ENCODE measurements at regions of chr7 and their contacts with region 1.

Region 1: DNA sequence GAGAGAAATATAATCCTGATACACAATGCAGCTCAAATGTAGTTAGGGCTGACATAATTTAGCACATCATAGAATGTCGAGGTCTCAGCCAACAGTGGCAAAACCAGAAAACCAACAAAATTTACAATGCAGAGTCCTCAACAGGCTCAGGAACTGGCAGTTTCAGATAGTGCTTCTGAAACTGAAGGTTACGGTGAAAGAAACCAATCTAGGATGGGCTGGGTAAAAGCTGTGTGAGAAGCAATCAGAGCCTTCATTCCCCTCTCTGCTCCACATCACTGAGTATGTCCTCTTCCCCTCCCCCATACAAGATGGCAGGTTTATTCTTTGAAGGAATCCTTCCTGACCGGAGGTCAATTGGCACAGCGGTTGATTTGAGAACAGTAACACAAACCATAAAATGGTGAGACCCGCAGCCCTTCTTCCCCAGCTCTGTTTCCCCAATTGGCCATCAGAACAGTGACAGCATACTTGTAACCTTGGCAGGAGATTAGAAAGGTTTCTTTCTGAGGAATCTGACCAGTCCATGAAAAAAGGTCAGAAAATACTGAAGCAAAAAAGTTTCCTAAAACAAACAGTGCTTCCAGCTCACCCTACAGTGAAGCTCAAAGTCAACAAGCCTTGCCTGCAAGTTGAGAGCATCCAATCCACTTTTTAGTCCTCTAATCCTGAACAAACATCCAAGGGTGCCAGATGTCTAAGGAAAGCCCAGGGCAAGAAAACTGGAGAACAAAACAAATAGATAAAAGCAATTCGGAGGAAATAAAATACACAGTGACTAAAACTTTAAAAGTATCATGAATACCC is 54.0 kb upstream of the IL6 start:
- DNase-seq: no peak
- ATAC-seq: no peak
- H3K4me3 ChIP-seq: no peak overlapping the region
- H3K4me3 Mint-ChIP-seq: peak overlapping the region in 7 of 10 donors; percentile 7 to 68 (median 37)
- H3K27ac ChIP-seq: no peak overlapping the region
- H3K27ac Mint-ChIP-seq: peak overlapping the region; percentile 14 to 88 (median 78)
- H3K4me1 ChIP-seq: peaks cover 18 to 54% of the 10 kb centered on the region in 2 donors
- H3K4me1 Mint-ChIP-seq: peaks cover 43 to 68% (median 65%) of the 10 kb centered on the region in 7 donors
- H3K27me3 ChIP-seq: no peaks in the 10 kb centered on the region
- H3K27me3 Mint-ChIP-seq: peaks cover 0 to 13% (median 0%) of the 10 kb centered on the region in 5 donors

Region 2: GRCh38 chr7:22686620-22687019 is 13.6 kb after region 1 on chr7:
- CTCF ChIA-PET with region 1: interaction called, 10 read pairs
- POLR2A ChIA-PET with region 1: interaction called, 4 read pairs
- intact Hi-C with region 1: no loop called
- DNase-seq: no peak
- ATAC-seq: no peak
- H3K4me3 ChIP-seq: no peak overlapping the region
- H3K4me3 Mint-ChIP-seq: no peak overlapping the region
- H3K27ac ChIP-seq: no peak overlapping the region
- H3K27ac Mint-ChIP-seq: no peak overlapping the region
- H3K4me1 ChIP-seq: no peaks in the 10 kb centered on the region
- H3K4me1 Mint-ChIP-seq: peaks cover 0 to 18% (median 5%) of the 10 kb centered on the region in 7 donors
- H3K27me3 ChIP-seq: no peaks in the 10 kb centered on the region
- H3K27me3 Mint-ChIP-seq: peaks cover 0 to 66% (median 0%) of the 10 kb centered on the region in 5 donors